Activated CD4-positive, alpha-beta memory T cell treated with anti-CD3 and anti-CD28 coated beads, Interleukin-2, amount 10 ng/mL, durations not matched to agents 7 days and 5 days (primary cell): ENCODE measurements at regions of chr1 and their contacts with region 1.

Region 1: DNA sequence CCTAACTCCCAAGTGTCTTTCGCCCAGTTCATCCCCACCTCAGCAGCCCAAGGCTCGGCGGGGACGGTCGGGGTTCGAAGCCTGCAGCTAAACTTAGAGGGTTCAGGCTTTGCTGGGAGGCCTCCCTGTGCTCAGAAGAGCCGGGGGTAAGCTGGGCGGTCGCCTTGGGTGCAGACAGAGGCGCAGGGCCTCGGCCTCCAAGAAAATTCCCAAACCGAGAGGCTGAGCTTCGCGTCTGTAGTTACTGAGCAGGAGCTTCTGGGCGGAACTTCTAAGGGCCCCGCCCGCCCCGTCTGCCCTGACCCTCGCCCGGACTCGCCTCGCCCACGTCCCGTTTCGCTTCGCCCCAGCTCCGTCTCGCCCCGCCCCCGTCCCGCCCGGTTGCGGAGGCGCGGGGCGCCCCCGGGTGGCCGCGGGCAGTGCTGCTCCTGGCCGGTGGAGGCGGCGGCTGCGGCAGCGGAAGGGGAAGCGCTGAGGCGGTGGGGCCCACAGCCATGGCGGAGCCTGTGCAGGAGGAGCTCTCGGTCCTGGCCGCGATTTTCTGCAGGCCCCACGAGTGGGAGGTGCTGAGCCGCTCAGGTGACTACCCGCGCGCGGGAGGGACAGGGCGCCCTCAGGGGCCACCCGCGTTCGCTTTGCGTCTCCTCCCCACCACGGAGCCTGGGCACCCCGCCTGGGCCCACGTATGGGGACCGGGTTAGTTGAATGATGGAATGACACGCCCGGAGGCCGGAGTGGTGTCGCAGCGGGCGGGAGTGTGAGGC is at the start of gene RWDD3:
- DNase-seq: peak; percentile 94
- H3K4me3 Mint-ChIP-seq: peak within 1 kb of the TSS; percentile 94
- H3K27ac Mint-ChIP-seq: peak within 1 kb of the TSS; percentile 77
- H3K4me1 Mint-ChIP-seq: peaks cover 28% of the 10 kb centered on the region
- H3K27me3 Mint-ChIP-seq: peaks cover 16% of the 10 kb centered on the region
- total RNA-seq, gene RWDD3: 16.5 to 17.9 TPM

Region 2: GRCh38 chr1:95043141-95043980 is 190.6 kb before region 1 on chr1:
- CTCF ChIA-PET with region 1: interaction called, 11 read pairs
- POLR2A ChIA-PET with region 1: interaction called, 3 read pairs
- DNase-seq: peak; percentile 79
- H3K4me3 Mint-ChIP-seq: no peak overlapping the region
- H3K27ac Mint-ChIP-seq: no peak overlapping the region
- H3K4me1 Mint-ChIP-seq: no peaks in the 10 kb centered on the region
- H3K27me3 Mint-ChIP-seq: no peaks in the 10 kb centered on the region

Region 3: GRCh38 chr1:95084317-95085176 is 149.4 kb before region 1 on chr1:
- CTCF ChIA-PET with region 1: interaction called, 18 read pairs
- POLR2A ChIA-PET with region 1: no interaction called
- DNase-seq: peak; percentile 18
- H3K4me3 Mint-ChIP-seq: no peak overlapping the region
- H3K27ac Mint-ChIP-seq: no peak overlapping the region
- H3K4me1 Mint-ChIP-seq: no peaks in the 10 kb centered on the region
- H3K27me3 Mint-ChIP-seq: peaks cover 19% of the 10 kb centered on the region

Region 4: GRCh38 chr1:95223110-95223509 is 10.8 kb before region 1 on chr1:
- CTCF ChIA-PET with region 1: interaction called, 20 read pairs
- POLR2A ChIA-PET with region 1: interaction called, 9 read pairs
- DNase-seq: no peak
- H3K4me3 Mint-ChIP-seq: no peak overlapping the region
- H3K27ac Mint-ChIP-seq: no peak overlapping the region
- H3K4me1 Mint-ChIP-seq: no peaks in the 10 kb centered on the region
- H3K27me3 Mint-ChIP-seq: peaks cover 5% of the 10 kb centered on the region

Region 5: GRCh38 chr1:95259245-95259644 is 25.3 kb after region 1 on chr1:
- CTCF ChIA-PET with region 1: no interaction called
- POLR2A ChIA-PET with region 1: no interaction called
- DNase-seq: no peak
- H3K4me3 Mint-ChIP-seq: no peak overlapping the region
- H3K27ac Mint-ChIP-seq: no peak overlapping the region
- H3K4me1 Mint-ChIP-seq: no peaks in the 10 kb centered on the region
- H3K27me3 Mint-ChIP-seq: peaks cover 4% of the 10 kb centered on the region

Region 6: GRCh38 chr1:95388031-95388430 is 154.1 kb after region 1 on chr1:
- CTCF ChIA-PET with region 1: no interaction called
- POLR2A ChIA-PET with region 1: no interaction called
- DNase-seq: no peak
- H3K4me3 Mint-ChIP-seq: no peak overlapping the region
- H3K27ac Mint-ChIP-seq: no peak overlapping the region
- H3K4me1 Mint-ChIP-seq: no peaks in the 10 kb centered on the region
- H3K27me3 Mint-ChIP-seq: no peaks in the 10 kb centered on the region